Caco-2 (cell line): ENCODE measurements at regions of chr18 and their contacts with region 1.

Region 1: DNA sequence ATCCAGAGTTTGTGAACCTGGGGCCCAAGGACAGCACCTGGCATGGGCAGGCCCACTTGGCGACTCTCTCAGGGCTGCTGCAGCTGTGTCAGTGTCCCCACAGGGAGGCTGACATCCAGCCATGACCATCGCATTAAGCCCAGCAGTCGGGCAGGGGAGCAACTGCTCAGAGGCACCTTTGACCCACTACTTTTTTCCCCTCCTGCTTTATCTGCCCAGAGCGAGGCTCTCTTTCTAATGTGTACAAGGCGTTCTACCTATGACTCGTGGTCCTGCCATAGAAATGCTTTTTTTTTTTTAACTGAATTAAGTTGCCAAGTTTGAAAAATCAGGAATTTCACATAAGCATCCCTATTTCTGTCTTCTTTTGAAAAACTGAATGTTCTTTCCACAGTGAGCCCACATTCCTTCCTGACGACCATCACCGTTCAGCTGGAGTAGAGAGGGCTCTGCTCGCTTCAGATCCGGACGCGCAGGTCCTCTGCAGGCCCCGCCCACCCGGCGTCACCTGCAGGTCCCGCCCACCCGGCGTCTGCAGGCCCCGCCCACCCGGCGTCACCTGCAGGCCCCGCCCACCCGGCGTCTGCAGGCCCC is 403 bp upstream of the CLUL1 start:
- DNase-seq: peak; percentile 28 to 41
- H3K4me3 ChIP-seq: peak overlapping the region; percentile 19
- H3K4me3 Mint-ChIP-seq: peak overlapping the region; percentile 70
- H3K27ac Mint-ChIP-seq: peak overlapping the region; percentile 33
- H3K4me1 ChIP-seq: peaks cover 16% of the 10 kb centered on the region
- H3K4me1 Mint-ChIP-seq: no peaks in the 10 kb centered on the region
- H3K27me3 ChIP-seq: no peaks in the 10 kb centered on the region
- H3K27me3 Mint-ChIP-seq: peaks cover 3% of the 10 kb centered on the region
- CTCF ChIP-seq: no peak

Region 2: DNA sequence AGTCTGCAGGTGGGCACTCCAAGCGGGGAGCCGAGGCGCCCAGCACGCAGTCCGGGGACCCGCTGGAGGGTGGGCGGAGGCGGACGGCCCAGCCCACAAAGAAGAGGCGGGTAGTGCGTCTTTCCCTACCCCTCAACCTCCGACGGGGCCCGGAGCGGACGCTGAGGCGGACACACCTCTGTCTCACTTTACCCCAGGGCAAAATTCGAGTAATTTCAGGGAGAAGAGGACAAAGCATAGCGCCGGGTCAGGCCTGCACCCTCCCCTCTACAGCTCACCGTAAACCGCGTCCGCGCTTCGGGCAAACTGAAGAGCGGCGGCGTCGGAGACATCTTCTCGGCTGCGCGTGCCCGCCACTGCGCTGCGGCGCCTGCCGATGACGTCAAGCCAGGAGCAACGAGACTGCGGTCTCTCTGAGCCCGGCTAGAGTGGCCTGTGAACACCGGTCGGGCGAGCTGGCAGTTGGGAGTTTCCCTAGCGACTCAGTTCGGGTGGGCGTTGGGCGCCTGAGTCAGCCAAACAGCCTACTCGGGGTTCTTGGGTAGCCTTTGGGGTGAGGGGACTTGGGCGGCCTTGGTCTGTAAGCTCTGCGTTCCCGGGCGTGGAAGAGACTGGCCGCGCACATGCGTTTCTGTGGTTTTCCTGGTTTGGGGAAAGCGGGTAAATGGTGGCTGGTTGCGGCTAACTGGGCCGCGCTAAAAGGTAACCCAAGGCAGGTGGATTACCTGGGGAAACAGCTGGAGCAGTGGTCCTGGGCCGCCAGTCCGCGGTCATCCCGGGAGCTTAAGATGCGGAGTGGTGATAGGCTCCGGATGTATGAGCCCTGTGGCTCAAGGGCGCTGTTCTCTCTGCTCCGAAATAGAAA is 328.5 kb before region 1 on chr18 and contains the start of gene THOC1:
- CTCF ChIA-PET with region 1: no interaction called
- POLR2A ChIA-PET with region 1: no interaction called
- intact Hi-C with region 1: loop called (anchors 5 kb)
- DNase-seq: peak; percentile 92 to 94
- H3K4me3 ChIP-seq: peak within 1 kb of the TSS; percentile 62
- H3K4me3 Mint-ChIP-seq: peak within 1 kb of the TSS; percentile 99
- H3K27ac Mint-ChIP-seq: peak within 1 kb of the TSS; percentile 100
- H3K4me1 ChIP-seq: peaks cover 9% of the 10 kb centered on the region
- H3K4me1 Mint-ChIP-seq: peaks cover 14% of the 10 kb centered on the region
- H3K27me3 ChIP-seq: no peaks in the 10 kb centered on the region
- H3K27me3 Mint-ChIP-seq: no peaks in the 10 kb centered on the region
- CTCF ChIP-seq: no peak
- total RNA-seq, gene THOC1: 63.1 and 65.4 TPM in 2 replicates

Region 3: DNA sequence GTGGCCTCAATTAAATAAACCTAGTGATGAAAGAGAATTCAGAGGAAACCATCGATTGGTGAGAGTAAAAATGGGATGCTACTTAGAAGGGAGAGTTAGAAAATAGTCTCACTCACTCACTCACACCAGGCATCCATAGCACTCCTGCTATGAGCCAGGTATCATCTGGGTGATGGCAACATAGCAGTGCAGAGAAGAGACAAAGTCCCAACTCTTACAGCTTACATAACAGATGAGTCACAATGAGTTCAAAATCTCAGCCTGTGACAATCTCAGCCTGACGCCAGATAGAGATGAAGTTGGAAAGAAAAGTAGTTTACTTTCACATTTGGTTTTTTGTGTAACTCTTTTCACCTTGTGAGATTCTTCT is 273.1 kb before region 1 on chr18:
- CTCF ChIA-PET with region 1: no interaction called
- POLR2A ChIA-PET with region 1: no interaction called
- intact Hi-C with region 1: loop called (anchors 2 kb)
- DNase-seq: peak; percentile 63 to 70
- H3K4me3 ChIP-seq: no peak overlapping the region
- H3K4me3 Mint-ChIP-seq: peak overlapping the region; percentile 52
- H3K27ac Mint-ChIP-seq: peak overlapping the region; percentile 96
- H3K4me1 ChIP-seq: peaks cover 35% of the 10 kb centered on the region
- H3K4me1 Mint-ChIP-seq: peaks cover 21% of the 10 kb centered on the region
- H3K27me3 ChIP-seq: no peaks in the 10 kb centered on the region
- H3K27me3 Mint-ChIP-seq: no peaks in the 10 kb centered on the region
- CTCF ChIP-seq: no peak

Region 4: DNA sequence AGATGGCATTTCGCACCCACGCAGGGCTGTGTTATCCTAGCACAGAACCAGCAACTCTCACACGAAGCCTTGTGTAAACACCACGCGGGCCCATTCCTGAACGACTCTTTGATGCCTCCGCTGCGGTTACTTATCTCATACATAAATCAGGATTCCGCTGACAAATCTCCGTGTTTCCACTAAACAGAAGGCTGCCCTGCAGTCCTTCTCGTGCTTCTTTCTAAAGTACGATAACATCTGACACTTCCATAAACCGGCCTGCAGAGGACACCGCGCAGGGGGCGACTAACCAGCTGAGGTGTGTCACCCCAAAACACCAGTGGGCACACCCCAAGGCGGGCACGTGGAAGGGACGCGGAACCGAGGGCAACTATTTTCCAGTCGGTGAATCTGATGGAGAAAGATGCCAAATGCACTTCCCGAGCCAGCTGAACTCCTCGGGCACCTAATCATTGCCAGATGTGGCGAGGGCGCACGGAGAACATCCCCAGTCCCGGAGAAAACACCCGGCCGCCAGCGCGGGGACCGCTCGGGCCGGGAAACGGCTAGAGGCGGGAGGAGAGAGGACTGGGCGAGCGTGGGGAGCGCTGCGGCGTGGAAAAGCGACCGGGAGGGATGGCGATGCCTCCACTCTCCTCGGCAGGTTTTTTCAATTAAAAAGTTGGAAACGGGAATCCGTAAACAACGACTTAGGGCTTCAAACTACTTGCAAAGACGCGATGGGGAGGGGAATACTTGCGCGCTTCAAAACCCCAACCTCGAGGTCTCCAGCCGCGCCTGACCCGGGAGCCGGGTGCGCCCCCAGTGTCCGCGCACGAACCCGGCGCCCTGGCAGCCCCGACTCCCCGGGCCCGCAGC is 96.6 kb before region 1 on chr18:
- CTCF ChIA-PET with region 1: no interaction called
- POLR2A ChIA-PET with region 1: no interaction called
- intact Hi-C with region 1: loop called (anchors 2 kb)
- DNase-seq: peak; percentile 82 to 89
- H3K4me3 ChIP-seq: peak overlapping the region; percentile 37
- H3K4me3 Mint-ChIP-seq: peak overlapping the region; percentile 79
- H3K27ac Mint-ChIP-seq: peak overlapping the region; percentile 85
- H3K4me1 ChIP-seq: peaks cover 44% of the 10 kb centered on the region
- H3K4me1 Mint-ChIP-seq: peaks cover 27% of the 10 kb centered on the region
- H3K27me3 ChIP-seq: no peaks in the 10 kb centered on the region
- H3K27me3 Mint-ChIP-seq: no peaks in the 10 kb centered on the region
- CTCF ChIP-seq: peak in 1 of 2 experiments; percentile 8

Region 5: GRCh38 chr18:525036-525797 is 71.2 kb before region 1 on chr18:
- CTCF ChIA-PET with region 1: interaction called, 5 read pairs
- POLR2A ChIA-PET with region 1: no interaction called
- intact Hi-C with region 1: loop called (anchors 5 kb)
- DNase-seq: no peak
- H3K4me3 ChIP-seq: no peak overlapping the region
- H3K4me3 Mint-ChIP-seq: no peak overlapping the region
- H3K27ac Mint-ChIP-seq: no peak overlapping the region
- H3K4me1 ChIP-seq: peaks cover 15% of the 10 kb centered on the region
- H3K4me1 Mint-ChIP-seq: peaks cover 27% of the 10 kb centered on the region
- H3K27me3 ChIP-seq: no peaks in the 10 kb centered on the region
- H3K27me3 Mint-ChIP-seq: no peaks in the 10 kb centered on the region
- CTCF ChIP-seq: no peak

Region 6: GRCh38 chr18:572091-572830 is 24.1 kb before region 1 on chr18:
- CTCF ChIA-PET with region 1: interaction called, 3 read pairs
- POLR2A ChIA-PET with region 1: no interaction called
- intact Hi-C with region 1: loop called (anchors 2 kb)
- DNase-seq: peak in 1 of 2 experiments; percentile 36
- H3K4me3 ChIP-seq: no peak overlapping the region
- H3K4me3 Mint-ChIP-seq: no peak overlapping the region
- H3K27ac Mint-ChIP-seq: peak overlapping the region; percentile 90
- H3K4me1 ChIP-seq: peaks cover 37% of the 10 kb centered on the region
- H3K4me1 Mint-ChIP-seq: peaks cover 24% of the 10 kb centered on the region
- H3K27me3 ChIP-seq: no peaks in the 10 kb centered on the region
- H3K27me3 Mint-ChIP-seq: no peaks in the 10 kb centered on the region
- CTCF ChIP-seq: no peak

Region 7: GRCh38 chr18:616380-616995 is 20.1 kb after region 1 on chr18:
- CTCF ChIA-PET with region 1: no interaction called
- POLR2A ChIA-PET with region 1: no interaction called
- intact Hi-C with region 1: loop called (anchors 1 kb)
- DNase-seq: peak in 1 of 2 experiments; percentile 26
- H3K4me3 ChIP-seq: no peak overlapping the region
- H3K4me3 Mint-ChIP-seq: no peak overlapping the region
- H3K27ac Mint-ChIP-seq: no peak overlapping the region
- H3K4me1 ChIP-seq: no peaks in the 10 kb centered on the region
- H3K4me1 Mint-ChIP-seq: no peaks in the 10 kb centered on the region
- H3K27me3 ChIP-seq: no peaks in the 10 kb centered on the region
- H3K27me3 Mint-ChIP-seq: peaks cover 2% of the 10 kb centered on the region
- CTCF ChIP-seq: peak; percentile 65 to 67